GM13976 (cell line): ENCODE measurements at regions of chr6 and their contacts with region 1.

Region 1: DNA sequence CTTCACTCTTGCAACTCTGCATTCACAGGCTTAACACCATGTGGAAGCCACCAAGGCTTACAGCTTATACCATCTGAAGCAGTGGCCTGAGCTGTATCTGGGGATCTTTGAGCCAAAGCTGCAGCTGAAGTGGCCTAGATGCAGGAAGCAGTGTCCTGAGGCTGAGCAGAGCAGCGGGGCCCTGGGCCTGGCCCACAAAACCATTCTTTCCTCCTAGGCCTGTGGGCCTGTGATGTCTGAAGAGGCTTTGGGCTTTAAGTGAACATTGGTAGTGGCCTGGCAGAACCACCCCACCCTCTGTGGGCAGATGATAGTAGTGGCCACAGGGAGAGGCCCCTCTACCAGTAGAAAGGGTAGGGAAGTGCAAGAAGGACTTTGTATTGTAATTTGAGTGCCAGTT is 6.9 kb upstream of the PREP start:
- DNase-seq: no peak
- CTCF ChIP-seq: no peak

Region 2: GRCh38 chr6:105097288-105097687 is 312.4 kb before region 1 on chr6:
- in situ Hi-C with region 1: loop called (anchors 10 kb)
- DNase-seq: no peak
- CTCF ChIP-seq: no peak